Endothelial cell of umbilical vein (primary cell): ENCODE measurements at regions of chr19 and their contacts with region 1.

Region 1: DNA sequence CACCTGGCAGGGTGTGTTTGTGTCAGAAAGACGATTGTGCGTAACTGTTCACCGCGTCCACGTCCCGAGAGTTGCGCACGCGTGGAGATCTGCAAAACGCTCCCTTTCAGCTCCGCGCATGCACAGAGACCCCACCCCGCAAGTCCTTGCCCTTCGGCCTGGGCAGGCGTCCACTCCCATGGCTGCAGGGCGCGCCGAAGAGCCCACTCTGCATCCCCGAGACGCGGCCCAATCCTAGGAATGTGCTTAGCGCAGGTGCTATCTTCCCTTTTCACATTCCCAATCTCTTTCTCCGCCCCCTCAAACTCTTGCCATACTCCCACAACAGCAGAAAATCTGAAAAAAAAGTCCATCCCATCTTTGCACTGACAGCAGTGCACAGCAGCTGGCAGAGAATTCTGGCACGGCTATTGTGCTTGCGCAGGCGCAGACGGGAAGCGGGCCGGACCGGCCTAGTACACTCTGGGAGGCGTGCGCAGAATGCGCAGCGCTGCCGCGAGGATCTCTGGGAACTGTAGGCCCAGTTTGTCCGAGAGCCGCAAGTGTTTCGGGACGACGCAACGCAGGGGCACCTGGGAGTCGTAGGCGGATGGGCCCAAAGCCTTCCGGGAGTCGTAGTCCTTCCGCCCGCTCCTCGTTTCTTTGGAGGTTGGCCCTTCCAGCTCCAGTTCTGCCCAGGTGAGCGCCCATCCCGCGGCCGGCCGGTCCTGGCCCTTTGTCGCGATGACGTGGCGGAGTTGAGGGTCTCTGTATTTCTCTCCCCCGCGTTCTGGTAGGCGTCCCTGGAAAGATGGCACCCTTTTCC is 23.1 kb downstream of the ZNF175 start:
- DNase-seq: peak; percentile 97
- H3K4me3 ChIP-seq: peak overlapping the region; percentile 16 to 53 (median 51)
- H3K27ac ChIP-seq: no peak overlapping the region
- H3K4me1 ChIP-seq: peaks cover 6% of the 10 kb centered on the region
- H3K27me3 ChIP-seq: no peaks in the 10 kb centered on the region
- CTCF ChIP-seq: no peak
- POLR2A ChIP-seq: no peak

Region 2: GRCh38 chr19:51108066-51108804 is 485.9 kb before region 1 on chr19 and contains the start of gene CTU1:
- CTCF ChIA-PET with region 1: no interaction called
- POLR2A ChIA-PET with region 1: no interaction called
- dilution Hi-C with region 1: no loop called
- intact Hi-C with region 1: loop called (anchors 2 kb)
- DNase-seq: peak; percentile 99
- H3K4me3 ChIP-seq: peak within 1 kb of the TSS; percentile 56 to 65 (median 64)
- H3K27ac ChIP-seq: peak within 1 kb of the TSS; percentile 51
- H3K4me1 ChIP-seq: peaks cover 11% of the 10 kb centered on the region
- H3K27me3 ChIP-seq: peaks cover 0 to 9% of the 10 kb centered on the region in 2 experiments
- CTCF ChIP-seq: no peak
- POLR2A ChIP-seq: peak; percentile 89
- total RNA-seq, gene CTU1: 8.2 and 8.7 TPM in 2 replicates

Region 3: DNA sequence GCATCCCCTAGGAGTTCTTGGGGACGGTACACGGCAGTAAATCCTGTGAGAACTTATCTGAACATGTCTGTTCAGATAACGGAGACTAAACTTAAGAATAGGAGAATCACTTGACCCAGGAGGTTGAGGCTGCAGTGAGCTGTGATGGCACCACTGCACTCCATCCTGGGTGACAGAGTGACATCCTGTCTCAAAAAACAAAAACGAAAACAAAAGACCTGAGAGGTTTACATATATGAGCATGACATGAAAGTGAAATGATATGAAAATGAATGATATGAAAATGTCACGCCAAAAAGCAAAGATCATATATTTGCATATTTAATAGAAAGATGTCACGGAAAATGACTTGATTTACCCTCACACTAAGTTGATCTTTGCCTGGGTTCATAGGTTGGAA is 17.3 kb before region 1 on chr19:
- CTCF ChIA-PET with region 1: no interaction called
- POLR2A ChIA-PET with region 1: no interaction called
- dilution Hi-C with region 1: no loop called
- intact Hi-C with region 1: no loop called
- DNase-seq: no peak
- H3K4me3 ChIP-seq: no peak overlapping the region
- H3K27ac ChIP-seq: no peak overlapping the region
- H3K4me1 ChIP-seq: peaks cover 30% of the 10 kb centered on the region
- H3K27me3 ChIP-seq: no peaks in the 10 kb centered on the region
- CTCF ChIP-seq: no peak
- POLR2A ChIP-seq: no peak